HEK293T (cell line): ENCODE measurements at regions of chr2 and their contacts with region 1.

Region 1: DNA sequence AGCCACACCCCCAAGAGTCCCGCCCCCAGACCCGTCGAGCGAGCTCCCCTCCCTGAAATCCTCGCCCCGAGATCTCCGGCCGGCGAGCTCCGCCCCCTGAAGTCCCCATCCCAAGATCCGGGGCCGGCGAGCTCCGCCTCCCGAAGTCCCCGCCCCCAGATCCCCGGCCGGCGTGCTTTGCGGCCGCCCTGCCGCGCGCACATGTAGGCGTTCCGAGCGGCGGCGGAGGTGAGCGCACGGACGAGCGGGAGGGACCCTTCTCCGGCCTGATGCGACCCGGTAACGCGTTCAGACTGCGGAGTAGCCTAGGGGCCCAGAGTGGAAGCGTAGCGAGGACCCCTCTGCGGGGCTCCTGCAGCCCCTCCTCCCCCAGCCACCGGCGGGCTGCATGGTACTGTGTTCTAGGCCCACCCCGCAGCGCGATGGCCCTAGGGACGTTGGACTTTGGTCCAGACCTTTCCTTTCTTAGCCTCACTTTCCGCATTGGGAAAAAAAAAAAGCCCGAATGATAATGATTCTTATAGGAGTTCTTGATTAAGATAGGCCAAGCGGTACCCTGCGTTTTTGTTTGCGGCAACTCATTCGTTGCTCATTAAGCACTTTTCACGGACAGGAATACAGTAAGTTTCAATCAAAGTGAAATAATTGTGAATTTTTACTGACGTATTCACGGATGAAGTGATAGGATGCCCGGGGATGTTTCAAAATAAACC is at the start of gene TMEM177:
- DNase-seq: peak; percentile 97

Region 2: GRCh38 chr2:119691189-119691588 is 12.0 kb after region 1 on chr2:
- CTCF ChIA-PET with region 1: no interaction called
- POLR2A ChIA-PET with region 1: interaction called, 11 read pairs
- DNase-seq: no peak